ENCODE measurements at regions of chr17 and their contacts with region 1.

Region 1: DNA sequence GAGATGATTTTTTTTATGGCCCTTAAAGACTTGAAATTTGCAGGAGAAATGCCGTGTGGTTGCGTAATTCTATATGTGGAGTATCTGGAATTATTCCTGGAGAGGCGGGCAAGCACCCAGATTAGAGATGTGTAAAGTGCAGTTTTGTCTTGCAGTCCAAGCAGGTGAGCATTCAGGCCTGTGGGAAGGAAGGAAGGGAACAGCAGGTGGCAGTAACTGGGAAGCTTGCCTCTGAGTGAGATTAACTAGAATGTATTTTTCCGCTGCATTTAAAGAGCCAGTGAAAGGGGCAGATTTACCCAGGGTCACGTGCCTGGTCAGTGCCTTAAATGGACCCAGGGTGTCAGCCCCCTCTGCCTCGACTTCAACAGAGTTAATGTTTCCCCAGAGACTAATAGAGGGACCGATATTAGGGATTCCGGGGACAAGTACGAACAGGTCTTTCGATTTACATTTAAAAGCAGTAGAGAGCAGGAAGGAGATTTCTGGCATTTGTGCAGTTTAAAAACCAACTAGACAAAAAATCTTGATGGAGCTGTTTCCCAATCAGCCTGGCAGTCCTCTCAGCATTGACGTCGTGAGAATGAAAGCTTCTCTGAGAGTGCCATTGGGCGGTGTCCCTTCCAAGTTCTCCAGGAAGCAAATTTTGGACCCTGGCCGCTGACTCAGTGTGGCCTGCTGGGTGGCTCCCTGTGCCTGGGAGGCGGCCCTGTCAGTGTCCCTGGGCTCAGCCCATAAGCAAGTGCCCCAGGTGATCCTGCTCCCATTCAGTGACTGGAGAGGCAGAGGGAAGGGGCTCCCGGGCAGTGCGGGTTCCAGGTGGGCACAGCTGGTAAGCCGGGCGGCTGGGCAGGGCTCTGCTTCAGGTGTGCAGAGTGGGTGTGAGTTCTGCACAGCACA is 38.2 kb downstream of the KSR1 start:
- DNase-seq: peak; percentile 21 to 79 (median 66)
- ATAC-seq: peak; percentile 41 to 89 (median 78)
- H3K4me3 ChIP-seq: peak overlapping the region in 2 of 12 donors; percentile 19 to 24
- H3K27ac ChIP-seq: peak overlapping the region in 5 of 12 donors; percentile 3 to 76 (median 29)
- H3K4me1 ChIP-seq: peaks cover 0 to 37% (median 14%) of the 10 kb centered on the region in 12 donors
- H3K27me3 ChIP-seq: no peaks in the 10 kb centered on the region
- CTCF ChIP-seq: peak in 8 of 12 donors; percentile 19 to 49 (median 36)
- POLR2A ChIP-seq: no peak

Region 2: GRCh38 chr17:27446569-27447301 is 47.7 kb before region 1 on chr17:
- intact Hi-C with region 1: loop called in 1 of 10 experiments (anchors 10 kb)
- DNase-seq: no peak
- ATAC-seq: peak in 1 of 4 donors; percentile 61
- H3K4me3 ChIP-seq: no peak overlapping the region
- H3K27ac ChIP-seq: no peak overlapping the region
- H3K4me1 ChIP-seq: peaks cover 0 to 9% (median 0%) of the 10 kb centered on the region in 12 donors
- H3K27me3 ChIP-seq: no peaks in the 10 kb centered on the region
- CTCF ChIP-seq: no peak
- POLR2A ChIP-seq: no peak

Region 3: GRCh38 chr17:27569257-27569722 is 74.8 kb after region 1 on chr17:
- intact Hi-C with region 1: loop called in 1 of 10 experiments (anchors 10 kb)
- DNase-seq: no peak
- ATAC-seq: peak in 1 of 4 donors; percentile 36
- H3K4me3 ChIP-seq: no peak overlapping the region
- H3K27ac ChIP-seq: peak overlapping the region in 1 of 12 donors; percentile 32
- H3K4me1 ChIP-seq: peaks cover 0 to 65% (median 38%) of the 10 kb centered on the region in 12 donors
- H3K27me3 ChIP-seq: no peaks in the 10 kb centered on the region
- CTCF ChIP-seq: peak; percentile 28 to 63 (median 43)
- POLR2A ChIP-seq: no peak

Region 4: DNA sequence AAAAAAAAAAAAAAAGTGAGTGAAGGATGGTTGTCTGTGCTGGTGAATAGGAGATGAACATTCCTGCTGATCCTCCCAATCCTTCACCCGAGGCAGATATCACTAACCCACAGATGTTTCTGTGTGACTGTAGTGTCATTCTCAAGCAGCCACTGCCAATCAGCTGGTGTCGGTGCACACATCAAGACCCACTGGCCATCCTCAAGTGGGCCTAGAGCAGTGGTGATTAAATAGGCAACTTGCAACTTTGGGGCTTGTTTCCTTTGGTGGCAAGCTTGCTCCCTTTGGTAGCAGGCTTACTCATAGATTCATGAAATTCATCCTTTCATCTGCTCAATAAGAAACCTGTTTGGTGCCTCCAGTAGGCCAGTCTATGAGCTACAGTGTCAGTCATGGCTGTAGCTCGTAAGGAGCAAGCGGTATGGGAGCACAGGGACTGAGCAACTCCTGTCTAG is 85.5 kb after region 1 on chr17:
- intact Hi-C with region 1: loop called in 1 of 10 experiments (anchors 5 kb)
- DNase-seq: peak in 1 of 5 donors; percentile 3
- ATAC-seq: no peak
- H3K4me3 ChIP-seq: no peak overlapping the region
- H3K27ac ChIP-seq: no peak overlapping the region
- H3K4me1 ChIP-seq: peaks cover 0 to 28% (median 20%) of the 10 kb centered on the region in 12 donors
- H3K27me3 ChIP-seq: no peaks in the 10 kb centered on the region
- CTCF ChIP-seq: no peak
- POLR2A ChIP-seq: no peak